ENCODE measurements at regions of chr7 and their contacts with region 1.

Region 1: DNA sequence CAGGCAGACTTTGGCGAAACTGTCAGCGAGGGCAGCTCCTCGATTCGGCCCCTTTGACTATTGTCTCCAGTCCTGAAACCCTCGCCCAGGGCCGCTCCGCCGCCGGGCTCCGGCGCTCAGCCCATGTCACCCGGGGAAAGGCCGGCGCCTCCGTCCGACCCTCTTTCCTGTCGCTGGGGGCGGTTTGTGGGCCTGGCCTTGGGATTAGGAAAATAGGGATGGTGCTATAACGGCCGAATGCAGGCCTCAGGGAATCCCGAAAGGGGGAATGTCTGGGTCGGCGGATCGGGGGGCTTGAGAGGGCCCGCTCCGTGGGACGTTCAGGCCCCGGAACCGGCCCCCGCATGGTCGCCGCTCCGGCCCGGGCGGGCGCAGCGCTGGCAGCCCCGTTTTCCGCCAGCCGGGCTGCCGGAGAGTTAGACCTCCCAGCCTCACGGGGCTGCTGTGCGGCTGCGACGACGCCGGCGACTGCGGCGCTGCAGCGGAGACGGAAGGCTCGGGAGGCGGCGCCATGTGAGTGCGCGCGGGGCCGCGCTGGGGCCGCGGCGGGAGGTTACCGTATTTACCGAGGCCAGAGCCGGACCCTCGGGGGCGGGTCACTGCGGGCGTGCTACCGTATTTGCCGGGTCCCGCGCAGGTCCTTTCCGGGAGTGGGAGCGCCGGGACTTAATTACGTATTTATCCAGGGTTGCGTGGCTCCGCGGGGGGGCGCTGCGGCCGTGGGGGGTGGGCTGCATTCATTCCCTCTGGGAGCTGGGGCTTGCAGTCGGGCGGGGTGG is 25.9 kb downstream of the ZNF775 start:
- DNase-seq: peak; percentile 78
- ATAC-seq: peak; percentile 36
- H3K4me3 Mint-ChIP-seq: peak overlapping the region; percentile 91
- H3K27ac Mint-ChIP-seq: peak overlapping the region; percentile 99
- H3K4me1 Mint-ChIP-seq: peaks cover 73% of the 10 kb centered on the region
- H3K27me3 Mint-ChIP-seq: no peaks in the 10 kb centered on the region
- CTCF ChIP-seq: no peak

Region 2: GRCh38 chr7:150322833-150323681 is 81.9 kb before region 1 on chr7 and contains the starts of genes ACTR3C and LRRC61:
- CTCF ChIA-PET with region 1: interaction called, 4 read pairs
- POLR2A ChIA-PET with region 1: interaction called, 10 read pairs
- intact Hi-C with region 1: loop called (anchors 1 kb)
- DNase-seq: peak; percentile 64
- ATAC-seq: peak; percentile 67
- H3K4me3 Mint-ChIP-seq: peak within 1 kb of the TSS; percentile 93
- H3K27ac Mint-ChIP-seq: peak within 1 kb of the TSS; percentile 92
- H3K4me1 Mint-ChIP-seq: peaks cover 54% of the 10 kb centered on the region
- H3K27me3 Mint-ChIP-seq: no peaks in the 10 kb centered on the region
- CTCF ChIP-seq: no peak
- total RNA-seq, gene ACTR3C: 10.1 and 14.3 TPM in 2 replicates
- total RNA-seq, gene LRRC61: 10.7 and 11.0 TPM in 2 replicates

Region 3: DNA sequence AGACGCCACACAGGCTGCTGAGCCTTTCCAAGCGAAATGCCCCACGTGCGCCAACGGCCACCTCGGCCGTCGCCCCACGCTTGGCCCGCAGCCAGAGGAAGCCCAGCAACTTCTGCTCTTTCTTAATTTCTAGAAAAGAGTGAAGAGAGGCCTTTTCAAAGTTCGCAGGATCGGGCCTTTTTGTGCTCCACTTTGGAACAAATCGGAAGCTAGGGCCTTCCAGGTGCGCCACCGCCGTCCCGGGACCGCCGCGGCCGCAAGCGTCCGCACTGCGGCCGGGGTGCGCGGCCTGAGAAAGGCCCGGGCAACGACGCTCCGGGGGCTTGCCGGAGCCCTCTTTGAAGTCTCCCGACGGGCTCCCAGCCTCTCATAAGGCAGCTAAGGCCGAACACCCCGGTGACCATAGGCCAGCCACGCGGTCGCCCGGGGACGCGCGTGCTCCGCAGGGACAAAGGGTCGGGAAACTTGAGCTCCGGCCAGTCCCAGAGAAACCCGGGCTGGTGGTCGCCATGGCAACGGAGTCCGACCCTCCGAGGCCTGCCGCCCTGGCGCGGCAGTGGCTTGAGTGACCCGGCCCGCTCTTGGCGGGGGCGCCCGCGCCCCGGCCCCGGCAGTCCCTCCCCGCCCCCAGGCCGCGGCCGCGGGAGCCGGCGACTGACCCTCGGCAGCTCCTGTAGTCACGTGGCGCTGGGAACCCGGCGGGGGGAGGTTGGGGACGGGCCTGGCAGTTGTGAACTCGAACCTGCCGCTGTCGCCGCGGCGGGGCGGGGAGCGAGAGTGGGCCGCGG is 36.7 kb before region 1 on chr7 and contains the start of gene REPIN1:
- CTCF ChIA-PET with region 1: interaction called, 6 read pairs
- POLR2A ChIA-PET with region 1: interaction called, 421 read pairs
- intact Hi-C with region 1: loop called (anchors 1 kb)
- DNase-seq: peak; percentile 85
- ATAC-seq: peak; percentile 43
- H3K4me3 Mint-ChIP-seq: peak within 1 kb of the TSS; percentile 95
- H3K27ac Mint-ChIP-seq: peak within 1 kb of the TSS; percentile 95
- H3K4me1 Mint-ChIP-seq: peaks cover 72% of the 10 kb centered on the region
- H3K27me3 Mint-ChIP-seq: no peaks in the 10 kb centered on the region
- CTCF ChIP-seq: no peak
- total RNA-seq, gene REPIN1: 106 and 116 TPM in 2 replicates

Region 4: DNA sequence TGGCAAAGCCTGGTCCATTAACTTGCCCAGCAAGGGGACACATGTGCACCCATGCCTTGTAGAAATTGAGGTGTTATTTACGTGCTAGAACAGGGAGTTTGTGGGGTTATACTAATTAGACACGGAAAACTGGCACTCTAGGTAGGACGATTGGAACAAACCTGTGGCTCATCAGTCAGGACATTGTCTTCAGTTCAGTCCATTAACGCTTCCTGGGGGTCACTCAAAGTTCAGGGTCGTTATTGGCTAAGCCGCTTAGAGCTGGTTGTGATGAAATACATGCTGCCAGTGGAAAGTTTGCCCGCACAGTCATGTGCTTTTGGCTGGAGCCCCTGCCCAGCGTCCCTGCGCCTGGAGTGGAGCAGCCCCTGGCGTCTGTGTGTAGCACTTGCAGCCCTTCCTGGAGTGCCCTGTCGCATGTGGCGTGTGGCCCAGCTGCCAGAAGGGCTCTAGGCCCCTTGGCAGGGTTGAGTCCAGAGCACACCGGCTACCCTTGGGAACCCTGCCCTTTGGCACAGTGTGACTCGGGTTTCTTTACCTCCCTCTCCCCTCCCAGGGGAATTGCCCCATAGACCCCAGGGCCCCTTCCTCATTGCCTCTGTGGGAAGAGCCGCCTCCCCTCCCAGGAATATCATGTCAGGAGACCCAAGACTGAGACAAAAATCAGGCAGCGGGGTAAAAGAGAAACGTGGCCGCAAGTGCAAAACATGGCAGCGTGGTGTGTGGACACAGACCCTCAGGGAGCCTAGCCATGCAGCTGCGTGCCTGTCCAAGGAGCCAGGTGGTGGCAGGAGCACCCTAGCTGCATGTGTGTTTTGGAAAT is 16.1 kb before region 1 on chr7:
- CTCF ChIA-PET with region 1: interaction called, 3 read pairs
- POLR2A ChIA-PET with region 1: interaction called, 16 read pairs
- intact Hi-C with region 1: no loop called
- DNase-seq: no peak
- ATAC-seq: peak; percentile 31
- H3K4me3 Mint-ChIP-seq: no peak overlapping the region
- H3K27ac Mint-ChIP-seq: no peak overlapping the region
- H3K4me1 Mint-ChIP-seq: no peaks in the 10 kb centered on the region
- H3K27me3 Mint-ChIP-seq: no peaks in the 10 kb centered on the region
- CTCF ChIP-seq: no peak

Region 5: DNA sequence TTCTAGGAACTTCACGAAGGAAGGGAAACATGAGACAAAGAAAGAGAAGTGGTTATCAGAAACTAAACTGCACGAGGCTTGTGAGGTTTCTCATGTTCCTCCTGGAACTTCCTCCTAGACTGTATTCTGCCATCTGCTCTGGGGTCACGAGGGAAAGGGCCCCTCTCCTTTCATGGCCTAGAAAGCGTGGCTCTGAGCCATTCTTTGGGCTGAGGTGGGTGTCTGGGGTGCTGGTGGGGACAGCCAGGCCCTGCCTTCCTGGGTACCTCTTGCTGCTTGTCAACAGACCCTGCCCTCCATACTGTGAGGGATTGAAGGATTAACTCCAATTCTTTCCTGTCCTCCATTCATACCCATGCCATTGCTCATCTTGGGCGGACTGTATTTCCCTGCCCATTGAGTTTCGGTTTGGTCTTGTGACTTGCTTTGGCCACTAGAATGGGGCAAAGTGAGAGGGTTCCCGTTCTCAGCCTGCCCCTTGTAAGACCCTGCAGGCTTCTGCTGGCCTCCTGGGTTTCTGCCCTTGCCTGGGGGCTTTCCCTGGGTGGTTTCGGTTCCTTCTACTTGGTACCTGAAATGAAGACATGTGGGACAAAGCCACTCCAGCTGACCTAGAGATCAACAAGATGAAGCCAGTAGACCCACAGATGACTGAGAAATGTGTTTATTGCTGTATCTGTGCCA is 30.5 kb after region 1 on chr7:
- CTCF ChIA-PET with region 1: interaction called, 3 read pairs
- POLR2A ChIA-PET with region 1: interaction called, 13 read pairs
- intact Hi-C with region 1: loop called (anchors 1 kb)
- DNase-seq: peak; percentile 74
- ATAC-seq: peak; percentile 92
- H3K4me3 Mint-ChIP-seq: peak overlapping the region; percentile 73
- H3K27ac Mint-ChIP-seq: peak overlapping the region; percentile 96
- H3K4me1 Mint-ChIP-seq: peaks cover 63% of the 10 kb centered on the region
- H3K27me3 Mint-ChIP-seq: peaks cover 2% of the 10 kb centered on the region
- CTCF ChIP-seq: no peak

Region 6: GRCh38 chr7:151057989-151058780 is 653.2 kb after region 1 on chr7:
- CTCF ChIA-PET with region 1: no interaction called
- POLR2A ChIA-PET with region 1: no interaction called
- intact Hi-C with region 1: loop called (anchors 2 kb)
- DNase-seq: peak; percentile 91
- ATAC-seq: peak; percentile 93
- H3K4me3 Mint-ChIP-seq: peak overlapping the region; percentile 92
- H3K27ac Mint-ChIP-seq: peak overlapping the region; percentile 89
- H3K4me1 Mint-ChIP-seq: peaks cover 36% of the 10 kb centered on the region
- H3K27me3 Mint-ChIP-seq: no peaks in the 10 kb centered on the region
- CTCF ChIP-seq: no peak

Measured in activated B cell treated with CpG ODN at 0.5 μM for 24 hours (primary cell).